ENCODE measurements at regions of chr21 and their contacts with region 1.

Region 1: DNA sequence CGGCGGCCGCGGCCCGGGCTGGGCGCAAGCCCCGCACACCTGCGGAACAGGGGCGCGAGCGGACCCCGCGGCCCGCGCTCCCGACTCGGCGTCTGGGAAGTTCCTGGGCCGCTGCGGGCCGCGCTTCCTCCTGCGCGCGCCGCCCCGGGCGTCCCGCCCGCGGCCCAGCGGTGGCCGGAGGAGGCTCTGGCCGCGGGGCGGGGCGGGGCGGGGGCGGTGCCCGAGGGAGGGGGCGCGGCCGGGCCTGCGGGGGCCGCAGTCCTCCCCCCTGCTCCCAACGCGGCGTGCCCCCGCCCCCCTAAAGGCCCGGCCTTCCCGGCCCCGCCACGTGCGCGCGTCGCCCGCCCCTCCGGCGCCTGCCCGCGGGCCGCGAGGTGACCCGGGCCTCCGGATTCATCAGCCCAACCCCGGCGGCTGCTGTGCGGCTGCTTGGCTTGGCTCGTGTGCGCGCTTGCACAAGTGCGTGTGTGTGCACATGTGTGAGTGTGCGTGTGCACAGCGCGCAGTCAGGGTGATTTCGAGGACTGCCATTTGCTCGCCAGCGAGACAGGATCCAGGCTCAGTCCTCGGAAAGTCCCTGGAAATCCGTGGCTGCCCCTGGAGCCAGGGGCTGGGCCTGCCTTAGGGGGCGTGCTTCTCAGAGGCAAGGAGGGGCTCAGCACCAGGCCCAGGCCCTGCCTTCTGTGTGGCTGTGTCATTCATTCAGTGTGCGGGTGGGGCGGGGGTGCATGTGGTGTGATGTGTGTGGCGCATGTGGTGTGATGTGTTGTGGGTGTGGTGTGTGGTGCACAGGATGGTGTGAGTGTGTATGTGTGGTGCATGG is at the start of gene C2CD2:
- DNase-seq: peak; percentile 78
- ATAC-seq: peak; percentile 82 to 89
- total RNA-seq, gene C2CD2: 16.2 to 17.1 TPM

Region 2: GRCh38 chr21:41885341-41886029 is 68.6 kb before region 1 on chr21:
- intact Hi-C with region 1: loop called in 1 of 2 experiments (anchors 10 kb)
- DNase-seq: no peak
- ATAC-seq: no peak